Spleen (tissue), 13 donors: ENCODE measurements at regions of chr2 and their contacts with region 1.

Region 1: GRCh38 chr2:102355526-102356380 is at the start of gene IL18R1:
- DNase-seq: peak; percentile 96
- H3K4me3 ChIP-seq: peak within 1 kb of the TSS; percentile 65 to 97 (median 75)
- H3K27ac ChIP-seq: peak within 1 kb of the TSS; percentile 75 to 96 (median 88)
- H3K4me1 ChIP-seq: peaks cover 3 to 57% (median 33%) of the 10 kb centered on the region in 6 donors
- H3K27me3 ChIP-seq: peaks cover 0 to 5% (median 0%) of the 10 kb centered on the region in 7 donors
- CTCF ChIP-seq: peak; percentile 54 to 93 (median 85)
- POLR2A ChIP-seq: no peak
- total RNA-seq, gene IL18R1: 15.7 to 97.6 (median 26.3) TPM

Region 2: GRCh38 chr2:102063941-102064678 is 291.6 kb before region 1 on chr2:
- intact Hi-C with region 1: no loop called
- DNase-seq: peak; percentile 86
- H3K4me3 ChIP-seq: peak overlapping the region in 1 of 8 donors; percentile 15
- H3K27ac ChIP-seq: peak overlapping the region in 7 of 8 donors; percentile 86 to 91 (median 89)
- H3K4me1 ChIP-seq: peaks cover 5 to 56% (median 30%) of the 10 kb centered on the region in 6 donors
- H3K27me3 ChIP-seq: peaks cover 0 to 41% (median 0%) of the 10 kb centered on the region in 7 donors
- CTCF ChIP-seq: no peak
- POLR2A ChIP-seq: no peak

Region 3: DNA sequence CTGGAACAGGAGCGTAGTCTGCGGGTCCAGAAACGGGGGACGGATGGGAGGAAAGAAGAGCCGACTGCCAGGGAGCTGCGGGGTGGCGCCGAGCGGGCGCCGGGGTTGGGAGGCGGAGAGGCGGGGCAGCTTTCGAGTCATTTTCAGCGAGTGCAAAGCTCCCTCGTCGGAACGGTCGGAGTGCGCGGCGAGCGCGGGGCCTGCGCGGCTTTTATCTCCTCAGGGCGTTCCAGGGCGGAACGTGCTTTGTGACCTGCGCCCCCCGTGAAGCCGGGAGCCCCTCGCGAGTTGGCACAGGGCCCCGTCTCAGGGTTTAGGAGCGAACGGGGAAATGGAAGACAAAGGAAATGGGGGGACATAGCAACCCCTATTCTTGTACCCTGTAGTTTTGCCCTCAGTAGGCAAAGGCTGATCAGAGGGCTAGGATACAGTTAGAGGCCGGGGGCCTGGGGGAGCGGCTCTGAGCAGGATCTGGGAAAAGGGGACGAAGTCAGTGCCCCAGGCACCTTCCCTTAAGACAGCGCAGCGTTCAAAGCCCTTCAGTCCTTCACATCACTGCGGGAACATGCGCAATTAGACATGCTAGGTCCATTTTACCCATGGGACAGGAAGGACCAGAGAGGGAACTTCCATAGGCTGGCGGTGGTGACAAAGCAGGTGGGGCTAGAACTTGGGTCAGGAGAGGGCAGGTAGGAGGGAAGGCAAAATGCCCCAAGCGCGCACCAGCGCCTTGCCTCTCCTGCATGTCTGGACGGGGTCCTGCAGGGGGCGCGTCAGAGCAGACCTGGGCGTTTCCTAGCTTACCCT is 104.5 kb before region 1 on chr2:
- intact Hi-C with region 1: loop called (anchors 10 kb)
- DNase-seq: peak; percentile 95
- H3K4me3 ChIP-seq: peak overlapping the region; percentile 12 to 65 (median 34)
- H3K27ac ChIP-seq: peak overlapping the region in 5 of 8 donors; percentile 42 to 89 (median 73)
- H3K4me1 ChIP-seq: peaks cover 0 to 46% (median 23%) of the 10 kb centered on the region in 6 donors
- H3K27me3 ChIP-seq: peaks cover 0 to 47% (median 0%) of the 10 kb centered on the region in 7 donors
- CTCF ChIP-seq: peak; percentile 59 to 94 (median 78)
- POLR2A ChIP-seq: no peak

Region 4: GRCh38 chr2:102514061-102514785 is 158.5 kb after region 1 on chr2:
- intact Hi-C with region 1: no loop called
- DNase-seq: no peak
- H3K4me3 ChIP-seq: no peak overlapping the region
- H3K27ac ChIP-seq: no peak overlapping the region
- H3K4me1 ChIP-seq: peaks cover 0 to 18% (median 5%) of the 10 kb centered on the region in 6 donors
- H3K27me3 ChIP-seq: peaks cover 0 to 10% (median 0%) of the 10 kb centered on the region in 7 donors
- CTCF ChIP-seq: no peak
- POLR2A ChIP-seq: no peak

Region 5: GRCh38 chr2:102806250-102806837 is 450.6 kb after region 1 on chr2:
- intact Hi-C with region 1: no loop called
- DNase-seq: no peak
- H3K4me3 ChIP-seq: no peak overlapping the region
- H3K27ac ChIP-seq: no peak overlapping the region
- H3K4me1 ChIP-seq: peaks cover 0 to 11% (median 0%) of the 10 kb centered on the region in 6 donors
- H3K27me3 ChIP-seq: no peaks in the 10 kb centered on the region
- CTCF ChIP-seq: peak; percentile 21 to 75 (median 65)
- POLR2A ChIP-seq: no peak